Left ventricle myocardium superior (tissue), 1 donor: ENCODE measurements at regions of chr5 and their contacts with region 1.

Region 1: GRCh38 chr5:92836861-92837755 is 743.9 kb downstream of the NR2F1-AS1 start:
- DNase-seq: no peak
- ATAC-seq: no peak

Region 2: DNA sequence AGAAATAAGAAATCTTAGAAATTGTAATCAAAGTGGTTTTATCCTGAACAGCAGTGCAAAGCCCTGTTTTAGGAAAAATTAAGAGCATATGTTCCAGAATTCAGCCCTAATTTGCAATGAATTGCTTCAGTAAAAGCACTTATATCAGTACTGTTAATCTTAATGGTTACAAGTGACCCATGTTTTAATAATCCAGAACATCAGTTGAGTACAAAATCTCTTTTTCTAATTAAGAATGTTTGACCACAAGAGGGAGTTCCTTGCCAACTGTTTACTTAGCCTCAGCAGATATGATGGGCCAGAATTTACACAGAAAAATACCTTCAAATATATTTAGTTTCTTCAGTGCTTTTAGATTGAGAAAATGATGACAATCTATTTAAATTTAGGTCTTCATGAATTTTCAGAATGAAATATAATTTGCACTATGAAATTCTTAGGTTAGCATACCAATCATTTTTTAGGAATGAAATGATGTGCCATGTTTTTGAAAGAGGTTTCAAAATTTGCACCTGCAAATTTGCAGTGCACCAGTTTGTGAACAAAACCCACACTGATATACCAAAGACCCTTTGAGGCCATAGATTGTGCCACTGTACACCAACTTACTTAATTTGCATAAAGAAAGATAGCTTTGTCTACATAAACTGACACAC is 527.6 kb before region 1 on chr5:
- intact Hi-C with region 1: loop called (anchors 2 kb)
- DNase-seq: no peak
- ATAC-seq: no peak

Region 3: GRCh38 chr5:92687821-92688722 is 149.0 kb before region 1 on chr5:
- intact Hi-C with region 1: no loop called
- DNase-seq: no peak
- ATAC-seq: no peak